Activated CD8-positive, alpha-beta T cell treated with anti-CD3 and anti-CD28 coated beads, Interleukin-2, amount 10 ng/mL, durations not matched to agents 7 days and 5 days (primary cell): ENCODE measurements at regions of chr3 and their contacts with region 1.

Region 1: GRCh38 chr3:48548729-48549705 is 7.6 kb downstream of the PFKFB4 start:
- DNase-seq: peak; percentile 90
- ATAC-seq: peak; percentile 97
- H3K4me3 Mint-ChIP-seq: no peak overlapping the region
- H3K27ac Mint-ChIP-seq: peak overlapping the region; percentile 49
- H3K4me1 Mint-ChIP-seq: peaks cover 28% of the 10 kb centered on the region
- H3K27me3 Mint-ChIP-seq: no peaks in the 10 kb centered on the region

Region 2: DNA sequence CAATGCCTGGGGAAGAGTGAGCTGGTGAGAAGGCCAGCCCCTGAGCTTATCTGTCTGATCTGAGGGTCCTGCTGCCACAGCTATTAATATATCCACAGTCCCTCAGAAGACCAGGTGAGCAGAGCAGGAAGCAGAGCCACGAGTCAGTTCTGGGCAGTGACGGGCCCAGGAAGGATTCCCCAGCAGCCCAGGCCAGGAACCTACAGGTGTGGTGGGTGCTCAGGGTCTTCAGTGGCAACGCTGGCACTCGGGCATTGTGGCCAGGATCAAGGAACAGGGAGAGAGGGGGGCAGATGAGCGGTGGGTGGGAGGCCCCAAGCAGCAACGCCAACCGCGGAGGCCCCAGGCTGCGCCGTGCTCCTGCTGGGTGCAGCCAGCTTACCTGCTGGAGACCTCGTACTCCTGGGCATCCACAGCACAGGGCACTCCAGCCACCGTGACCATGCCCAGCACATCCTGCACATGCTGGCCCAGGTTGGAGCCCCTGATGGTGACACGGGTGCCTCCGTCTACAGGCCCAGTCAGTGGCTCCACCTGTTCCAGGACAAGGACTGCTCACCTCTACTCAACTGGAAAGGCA is 131.4 kb before region 1 on chr3:
- CTCF ChIA-PET with region 1: no interaction called
- POLR2A ChIA-PET with region 1: no interaction called
- DNase-seq: no peak
- ATAC-seq: no peak
- H3K4me3 Mint-ChIP-seq: no peak overlapping the region
- H3K27ac Mint-ChIP-seq: no peak overlapping the region
- H3K4me1 Mint-ChIP-seq: peaks cover 4% of the 10 kb centered on the region
- H3K27me3 Mint-ChIP-seq: no peaks in the 10 kb centered on the region

Region 3: GRCh38 chr3:48429317-48429959 is 119.6 kb before region 1 on chr3:
- CTCF ChIA-PET with region 1: interaction called, 10 read pairs
- POLR2A ChIA-PET with region 1: no interaction called
- DNase-seq: peak; percentile 53
- ATAC-seq: peak; percentile 74
- H3K4me3 Mint-ChIP-seq: peak overlapping the region; percentile 71
- H3K27ac Mint-ChIP-seq: no peak overlapping the region
- H3K4me1 Mint-ChIP-seq: peaks cover 17% of the 10 kb centered on the region
- H3K27me3 Mint-ChIP-seq: peaks cover 18% of the 10 kb centered on the region

Region 4: DNA sequence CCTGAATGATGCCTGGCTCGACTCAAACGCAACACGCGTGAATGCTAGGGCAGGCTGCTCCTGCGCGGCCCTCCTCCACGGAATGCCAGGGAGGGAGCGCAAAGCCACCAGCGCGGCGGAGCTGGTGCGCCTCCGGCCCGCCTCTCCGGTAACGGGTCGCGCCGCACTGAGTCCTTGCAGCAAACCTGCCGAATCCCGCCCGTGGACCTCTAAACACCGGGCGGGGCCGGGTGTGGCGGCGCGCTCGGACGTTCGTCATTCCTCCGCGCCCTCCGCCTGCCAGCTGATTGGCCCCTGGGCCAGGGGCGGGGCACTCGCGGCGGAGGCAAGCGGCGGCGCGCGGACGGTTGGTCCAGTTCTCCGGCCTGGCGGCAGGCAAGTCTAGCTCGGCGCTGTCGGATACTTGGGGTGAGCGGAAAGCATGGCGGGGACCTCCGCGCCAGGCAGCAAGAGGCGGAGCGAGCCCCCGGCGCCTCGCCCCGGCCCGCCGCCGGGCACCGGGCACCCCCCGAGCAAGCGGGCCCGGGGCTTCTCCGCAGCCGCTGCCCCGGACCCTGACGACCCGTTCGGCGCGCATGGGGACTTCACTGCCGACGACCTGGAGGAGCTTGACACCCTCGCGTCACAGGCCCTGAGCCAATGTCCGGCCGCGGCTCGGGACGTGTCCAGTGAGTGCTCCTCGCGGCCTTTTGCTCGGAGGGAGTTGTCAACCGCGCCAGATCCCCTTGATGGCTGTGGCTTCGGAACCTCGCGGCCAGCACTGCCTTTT is 102.4 kb before region 1 on chr3 and contains the start of gene ATRIP:
- CTCF ChIA-PET with region 1: interaction called, 19 read pairs
- POLR2A ChIA-PET with region 1: no interaction called
- DNase-seq: peak; percentile 89
- ATAC-seq: peak; percentile 97
- H3K4me3 Mint-ChIP-seq: peak within 1 kb of the TSS; percentile 84
- H3K27ac Mint-ChIP-seq: peak within 1 kb of the TSS; percentile 87
- H3K4me1 Mint-ChIP-seq: peaks cover 46% of the 10 kb centered on the region
- H3K27me3 Mint-ChIP-seq: no peaks in the 10 kb centered on the region
- total RNA-seq, gene ATRIP: 18.8 to 20.3 TPM

Region 5: DNA sequence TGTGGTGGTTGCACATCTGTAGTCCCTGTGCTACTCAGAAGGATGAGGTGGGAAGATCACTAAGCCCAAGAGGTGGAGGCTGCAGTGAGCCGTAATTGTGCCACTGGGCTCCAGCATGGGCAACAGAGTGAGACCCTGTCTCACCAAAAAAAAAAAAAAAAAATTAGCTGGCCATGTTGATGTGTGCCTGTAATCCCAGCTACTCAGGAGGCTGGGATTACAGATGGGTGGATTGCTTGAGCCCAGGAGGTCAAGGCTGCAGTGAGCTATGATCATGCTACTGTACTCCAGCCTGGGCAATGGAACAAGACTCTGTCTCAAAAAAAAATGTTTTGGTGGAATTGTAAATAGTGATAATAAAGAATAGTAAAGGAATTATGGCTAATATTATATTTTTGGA is 92.6 kb before region 1 on chr3:
- CTCF ChIA-PET with region 1: interaction called, 10 read pairs
- POLR2A ChIA-PET with region 1: no interaction called
- DNase-seq: no peak
- ATAC-seq: no peak
- H3K4me3 Mint-ChIP-seq: no peak overlapping the region
- H3K27ac Mint-ChIP-seq: no peak overlapping the region
- H3K4me1 Mint-ChIP-seq: peaks cover 17% of the 10 kb centered on the region
- H3K27me3 Mint-ChIP-seq: no peaks in the 10 kb centered on the region

Region 6: DNA sequence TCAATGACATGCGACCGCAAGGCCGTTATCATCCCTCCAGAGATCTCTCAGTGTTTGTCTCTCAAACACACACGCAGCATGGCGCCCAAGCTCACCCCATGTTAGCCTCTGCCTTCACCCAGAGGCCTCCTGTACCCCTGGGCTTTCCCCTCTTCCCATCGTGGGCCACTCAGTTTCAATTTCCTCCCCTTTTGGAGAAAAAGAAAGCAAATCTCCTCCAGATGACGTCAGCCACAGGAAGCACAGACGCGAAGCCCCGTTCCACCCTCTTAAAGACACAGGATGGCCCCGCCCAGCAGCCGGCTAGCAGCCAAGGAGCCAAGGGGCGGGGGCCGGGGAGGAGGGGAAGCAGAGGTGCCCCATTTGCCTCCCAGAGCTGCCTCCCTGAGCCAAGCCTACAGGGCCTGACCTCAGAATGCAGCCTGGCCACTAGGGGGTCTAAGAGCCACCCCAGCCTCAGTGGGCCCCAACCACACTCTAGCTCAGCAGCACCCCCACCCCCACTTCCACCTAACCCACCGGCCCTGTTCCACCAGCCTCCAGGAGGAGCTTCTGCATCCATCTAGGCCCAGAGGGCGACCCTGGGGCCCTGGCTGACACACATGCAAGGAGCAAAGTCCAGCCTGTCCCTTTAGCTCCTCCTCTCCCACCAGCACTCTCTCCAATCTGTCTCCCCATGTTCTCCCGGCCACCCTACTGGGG is 76.0 kb before region 1 on chr3:
- CTCF ChIA-PET with region 1: interaction called, 14 read pairs
- POLR2A ChIA-PET with region 1: interaction called, 4 read pairs
- DNase-seq: peak; percentile 98
- ATAC-seq: peak; percentile 88
- H3K4me3 Mint-ChIP-seq: peak overlapping the region; percentile 93
- H3K27ac Mint-ChIP-seq: peak overlapping the region; percentile 100
- H3K4me1 Mint-ChIP-seq: peaks cover 73% of the 10 kb centered on the region
- H3K27me3 Mint-ChIP-seq: no peaks in the 10 kb centered on the region

Region 7: GRCh38 chr3:48507351-48508061 is 41.5 kb before region 1 on chr3:
- CTCF ChIA-PET with region 1: interaction called, 31 read pairs
- POLR2A ChIA-PET with region 1: no interaction called
- DNase-seq: peak; percentile 86
- ATAC-seq: peak; percentile 87
- H3K4me3 Mint-ChIP-seq: no peak overlapping the region
- H3K27ac Mint-ChIP-seq: peak overlapping the region; percentile 81
- H3K4me1 Mint-ChIP-seq: peaks cover 53% of the 10 kb centered on the region
- H3K27me3 Mint-ChIP-seq: peaks cover 6% of the 10 kb centered on the region

Region 8: GRCh38 chr3:48514436-48515227 is 34.4 kb before region 1 on chr3:
- CTCF ChIA-PET with region 1: interaction called, 31 read pairs
- POLR2A ChIA-PET with region 1: no interaction called
- DNase-seq: peak; percentile 77
- ATAC-seq: peak; percentile 73
- H3K4me3 Mint-ChIP-seq: peak overlapping the region; percentile 43
- H3K27ac Mint-ChIP-seq: peak overlapping the region; percentile 75
- H3K4me1 Mint-ChIP-seq: peaks cover 65% of the 10 kb centered on the region
- H3K27me3 Mint-ChIP-seq: peaks cover 6% of the 10 kb centered on the region